ENCODE measurements at regions of chr10 and their contacts with region 1.

Region 1: DNA sequence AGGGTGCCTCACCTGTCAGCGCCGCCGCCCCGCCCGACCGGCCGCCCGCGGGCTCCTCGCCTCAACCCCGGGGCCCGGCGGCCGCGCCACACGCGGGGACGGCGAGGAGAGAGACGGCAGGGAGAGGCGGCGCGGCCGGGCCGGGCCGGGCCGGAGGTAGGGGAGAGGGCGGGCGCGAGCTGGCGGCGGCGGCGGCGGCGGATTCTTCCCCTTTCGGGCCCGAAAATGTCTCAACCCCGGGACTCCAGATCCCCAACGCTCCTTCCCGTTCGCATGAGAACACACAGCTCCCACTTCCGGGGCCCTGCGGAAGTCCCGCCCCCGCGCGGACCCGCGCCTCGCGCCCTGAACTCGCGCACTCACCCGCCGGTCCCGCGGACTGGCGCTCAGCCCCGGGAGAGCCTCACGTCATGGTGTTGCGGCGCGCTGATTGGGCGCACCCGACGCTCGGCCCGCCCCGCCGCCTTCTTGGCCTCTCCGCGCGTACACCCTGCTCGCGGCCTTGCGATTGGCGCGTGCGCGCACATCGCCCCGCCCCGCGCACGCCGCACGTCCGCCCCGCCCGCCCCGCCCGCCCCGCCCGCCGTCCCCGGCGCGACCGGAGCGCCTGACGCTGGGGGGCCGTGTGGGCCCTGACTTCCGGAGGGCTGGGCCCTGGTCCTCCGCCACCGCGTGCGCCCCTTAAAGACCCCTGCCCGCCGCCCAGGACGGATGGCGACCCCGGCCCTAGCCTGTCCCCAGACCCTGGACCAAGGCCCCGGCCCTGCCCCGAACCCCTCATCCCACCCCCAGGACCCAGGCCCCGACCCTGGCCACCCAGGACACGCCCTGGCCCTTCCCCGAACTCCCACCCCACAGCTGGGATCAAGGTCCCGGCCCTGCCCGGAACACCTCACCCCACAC is at the start of gene LARP4B:
- DNase-seq: peak; percentile 97
- ATAC-seq: peak; percentile 98
- H3K4me3 Mint-ChIP-seq: peak within 1 kb of the TSS; percentile 96
- H3K27ac Mint-ChIP-seq: peak within 1 kb of the TSS; percentile 96
- H3K4me1 Mint-ChIP-seq: peaks cover 36% of the 10 kb centered on the region
- H3K27me3 Mint-ChIP-seq: no peaks in the 10 kb centered on the region
- total RNA-seq, gene LARP4B: 107 to 108 TPM

Region 2: GRCh38 chr10:851901-852300 is 79.8 kb before region 1 on chr10:
- CTCF ChIA-PET with region 1: no interaction called
- POLR2A ChIA-PET with region 1: no interaction called
- DNase-seq: no peak
- ATAC-seq: no peak
- H3K4me3 Mint-ChIP-seq: no peak overlapping the region
- H3K27ac Mint-ChIP-seq: peak overlapping the region; percentile 34
- H3K4me1 Mint-ChIP-seq: peaks cover 34% of the 10 kb centered on the region
- H3K27me3 Mint-ChIP-seq: no peaks in the 10 kb centered on the region

Region 3: DNA sequence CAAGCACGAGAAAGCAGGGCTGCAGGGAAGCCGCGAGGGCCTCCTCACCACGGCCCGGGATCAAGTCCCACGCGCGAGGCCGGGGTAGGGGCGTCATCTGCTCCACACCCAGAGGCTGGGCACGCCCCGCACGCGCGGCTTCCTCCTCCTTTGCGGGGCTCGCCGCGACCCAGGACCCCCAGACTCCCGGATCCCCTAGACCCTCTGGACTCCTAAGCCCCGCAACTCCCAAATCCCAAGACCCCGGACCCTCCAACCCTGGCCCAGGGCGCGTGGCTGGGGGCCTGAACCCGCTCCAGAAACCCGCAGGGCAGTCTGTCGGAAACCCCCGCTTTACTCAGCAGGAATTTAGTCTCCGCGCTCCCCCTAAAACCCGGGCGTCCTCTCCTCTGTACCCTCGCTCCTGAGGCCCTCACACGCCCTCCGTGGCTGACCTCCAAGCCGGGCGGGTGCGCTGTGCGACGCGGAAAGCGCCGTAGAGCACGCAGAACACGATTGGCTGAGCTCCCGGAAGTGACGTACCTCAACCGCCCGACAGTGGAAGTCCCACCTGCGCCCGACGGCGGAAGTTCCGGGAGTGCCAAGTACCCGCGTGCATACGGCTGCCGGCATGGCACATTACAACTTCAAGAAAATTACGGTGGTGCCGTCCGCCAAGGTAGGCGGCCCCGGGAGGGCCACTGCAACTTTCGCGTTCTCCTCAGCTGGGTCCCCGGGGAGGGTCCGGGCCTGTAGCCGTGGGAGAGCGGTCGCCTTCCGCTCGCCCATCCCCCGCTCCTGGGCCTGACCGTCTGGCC is 56.4 kb after region 1 on chr10 and contains the start of gene GTPBP4:
- CTCF ChIA-PET with region 1: interaction called, 4 read pairs
- POLR2A ChIA-PET with region 1: interaction called, 26 read pairs
- DNase-seq: peak; percentile 98
- ATAC-seq: peak; percentile 98
- H3K4me3 Mint-ChIP-seq: peak within 1 kb of the TSS; percentile 92
- H3K27ac Mint-ChIP-seq: peak within 1 kb of the TSS; percentile 94
- H3K4me1 Mint-ChIP-seq: peaks cover 35% of the 10 kb centered on the region
- H3K27me3 Mint-ChIP-seq: no peaks in the 10 kb centered on the region
- total RNA-seq, gene GTPBP4: 66.0 to 67.1 TPM